ENCODE measurements at regions of chr20 and their contacts with region 1.

Region 1: DNA sequence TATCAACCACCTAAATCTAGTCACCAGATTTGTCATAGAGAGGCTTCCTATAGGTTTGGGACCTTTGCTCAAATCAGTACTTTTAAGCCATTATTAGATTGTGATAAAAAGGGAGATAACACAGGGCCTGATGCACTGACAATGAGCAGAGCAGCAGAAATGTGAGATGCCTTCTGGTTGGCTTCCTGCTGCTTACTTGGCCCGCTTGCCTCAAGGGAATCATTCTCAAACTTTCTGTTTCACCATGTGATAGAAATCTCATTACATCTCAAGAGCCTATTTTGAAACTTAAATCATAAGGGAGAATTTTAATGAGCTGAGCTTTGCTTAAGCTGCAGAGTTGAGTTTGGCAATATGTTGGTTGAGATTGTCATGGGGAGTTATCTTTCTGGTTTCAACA is 606.0 kb downstream of the DHX35 start:
- DNase-seq: no peak
- ATAC-seq: peak; percentile 87
- H3K4me3 Mint-ChIP-seq: peak overlapping the region; percentile 2
- H3K27ac Mint-ChIP-seq: peak overlapping the region; percentile 74
- H3K4me1 Mint-ChIP-seq: peaks cover 14% of the 10 kb centered on the region
- H3K27me3 Mint-ChIP-seq: no peaks in the 10 kb centered on the region
- CTCF ChIP-seq: no peak

Region 2: GRCh38 chr20:39338469-39339376 is 229.4 kb before region 1 on chr20:
- CTCF ChIA-PET with region 1: no interaction called
- POLR2A ChIA-PET with region 1: no interaction called
- intact Hi-C with region 1: loop called (anchors 2 kb)
- DNase-seq: no peak
- ATAC-seq: peak; percentile 99
- H3K4me3 Mint-ChIP-seq: peak overlapping the region; percentile 12
- H3K27ac Mint-ChIP-seq: peak overlapping the region; percentile 84
- H3K4me1 Mint-ChIP-seq: peaks cover 29% of the 10 kb centered on the region
- H3K27me3 Mint-ChIP-seq: no peaks in the 10 kb centered on the region
- CTCF ChIP-seq: no peak